Cardiac septum (tissue), 1 donor: ENCODE measurements at regions of chr21 and their contacts with region 1.

Region 1: GRCh38 chr21:38805328-38806152 is at the start of gene ETS2:
- DNase-seq: peak; percentile 98
- total RNA-seq, gene ETS2: 36.4 TPM

Region 2: DNA sequence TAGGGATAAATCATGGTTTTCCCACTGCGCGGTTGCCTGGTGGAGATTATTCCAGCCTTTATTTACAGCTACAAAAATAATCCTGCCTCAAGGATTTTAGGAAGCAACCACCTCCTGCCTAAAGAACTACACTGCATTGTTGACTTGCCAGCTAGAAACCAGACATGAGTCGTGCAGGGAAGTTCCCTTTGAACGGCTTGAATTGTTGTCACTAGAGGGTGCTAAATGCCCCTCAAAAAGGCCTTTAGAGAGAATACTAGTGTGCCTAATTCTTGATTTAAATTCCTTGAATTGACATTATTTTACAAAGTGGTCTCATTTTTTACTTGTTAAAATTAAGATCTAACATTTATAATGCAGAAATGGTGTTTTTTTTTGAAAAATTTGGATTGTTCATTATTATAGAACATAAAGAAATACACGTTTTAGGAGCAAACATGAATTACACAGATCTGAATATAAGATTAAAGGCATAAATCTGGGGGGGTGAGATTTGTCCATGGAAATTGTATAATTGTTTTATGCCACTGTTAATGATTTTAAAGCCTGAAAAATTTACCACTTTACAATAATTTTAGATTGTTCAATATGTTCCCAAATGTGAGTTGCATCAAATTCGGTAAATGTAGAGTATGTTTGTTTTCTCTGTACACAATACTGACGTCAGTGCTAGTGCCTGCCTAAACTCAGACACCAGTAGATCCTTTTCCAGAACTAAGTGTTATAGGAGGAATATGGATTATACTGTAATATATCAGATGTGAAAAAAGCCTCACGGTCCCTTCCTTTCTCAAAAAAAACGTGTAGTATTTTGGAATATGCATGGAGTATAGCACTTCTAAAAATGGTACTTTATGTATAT is 299.7 kb before region 1 on chr21:
- intact Hi-C with region 1: loop called (anchors 10 kb)
- DNase-seq: no peak

Region 3: GRCh38 chr21:38913120-38913892 is 107.8 kb after region 1 on chr21:
- intact Hi-C with region 1: loop called (anchors 5 kb)
- DNase-seq: peak; percentile 88

Region 4: DNA sequence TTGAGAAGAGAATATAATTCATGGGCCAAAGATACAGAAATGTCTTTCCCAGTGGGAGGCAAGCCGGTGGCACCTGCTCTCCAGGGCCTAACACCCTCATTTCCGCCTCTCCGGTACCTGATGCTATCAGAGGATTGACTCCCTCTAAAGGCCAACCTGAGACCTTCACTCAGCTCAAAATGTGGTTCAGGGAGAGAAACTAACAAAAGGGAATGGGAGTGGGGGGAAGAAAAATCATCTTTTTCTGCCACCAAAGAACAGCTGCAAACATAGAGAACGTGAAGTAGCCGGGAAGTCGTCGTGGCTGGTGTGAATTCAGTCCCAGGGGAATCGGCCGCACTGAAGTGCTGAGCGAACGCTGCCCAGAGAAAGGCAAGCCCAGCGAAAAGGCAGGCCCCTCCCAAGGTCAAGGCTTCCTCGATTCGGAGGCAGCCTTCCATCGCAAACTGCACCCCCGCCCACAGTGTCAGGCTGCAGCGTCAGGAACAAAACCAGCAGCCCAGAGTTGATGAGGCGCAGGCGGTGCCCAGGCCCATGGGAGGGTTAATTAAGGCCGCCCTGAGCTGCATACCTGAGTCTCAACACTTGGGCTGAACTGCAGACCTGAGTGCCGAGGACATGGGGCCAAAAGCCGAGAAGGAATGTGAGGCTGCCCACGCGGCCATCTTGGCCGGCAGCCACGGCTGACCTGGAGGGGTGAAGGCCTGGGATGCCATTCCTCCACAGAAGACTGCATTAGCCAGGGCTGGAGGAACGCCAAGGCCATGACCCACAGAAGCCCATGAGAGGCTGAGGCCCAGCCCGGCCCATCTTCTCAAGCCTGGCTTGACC is 217.5 kb after region 1 on chr21:
- intact Hi-C with region 1: loop called (anchors 5 kb)
- DNase-seq: peak; percentile 87

Region 5: GRCh38 chr21:39125752-39126485 is 320.4 kb after region 1 on chr21:
- intact Hi-C with region 1: loop called (anchors 2 kb)
- DNase-seq: no peak